Posterior vena cava (tissue), 2 donors: ENCODE measurements at regions of chr14 and their contacts with region 1.

Region 1: GRCh38 chr14:91817566-91818325 is 49.6 kb downstream of the TC2N start:
- DNase-seq: no peak

Region 2: GRCh38 chr14:89922031-89922907 is 1895.5 kb before region 1 on chr14:
- intact Hi-C with region 1: loop called in 1 of 2 experiments (anchors 10 kb)
- DNase-seq: no peak

Region 3: DNA sequence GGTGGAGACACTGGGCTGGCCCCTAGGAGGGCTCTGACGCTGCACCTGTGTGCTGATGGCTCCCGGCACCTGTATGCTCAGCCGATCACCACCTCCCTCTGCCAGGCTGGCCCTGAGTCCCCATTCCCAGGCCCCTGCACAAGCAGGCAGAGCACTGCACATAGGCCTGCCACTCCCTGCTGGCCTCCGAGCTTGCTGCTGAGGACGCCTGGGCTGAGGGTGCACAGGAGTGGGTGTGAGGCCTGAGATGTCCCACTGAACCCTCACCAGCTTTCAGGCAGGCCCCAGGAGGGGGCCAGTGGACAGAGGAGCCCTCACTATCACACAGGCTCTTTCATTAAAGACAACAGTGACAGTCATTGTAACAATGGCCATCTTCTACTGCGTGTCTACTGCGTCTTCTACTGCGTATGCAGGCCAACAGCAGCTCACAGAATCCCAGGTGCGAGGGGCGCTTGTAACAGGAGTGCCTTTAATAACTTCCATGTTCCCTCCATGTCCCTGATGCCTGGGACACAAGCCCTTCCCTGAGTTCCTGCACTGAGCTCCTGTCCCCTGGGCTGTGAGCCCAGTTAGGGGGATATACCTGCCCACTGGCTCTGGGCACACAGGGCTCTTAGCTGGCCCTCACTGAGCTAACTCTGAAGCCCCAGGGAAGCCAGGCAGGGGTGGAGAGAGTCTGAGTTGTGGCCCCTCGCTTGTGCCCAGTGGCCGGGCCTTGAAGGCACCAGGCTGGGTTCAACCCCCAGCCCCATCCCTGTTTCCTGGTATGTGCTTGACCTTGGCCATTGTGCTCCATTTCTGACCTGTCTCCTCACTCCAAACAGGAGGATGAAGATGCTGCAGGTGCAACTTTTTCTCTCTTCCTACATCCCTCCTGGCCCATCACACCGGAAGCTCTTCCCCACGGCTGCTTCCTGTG is 1899.3 kb after region 1 on chr14:
- intact Hi-C with region 1: no loop called
- DNase-seq: no peak